HEK293T (cell line): ENCODE measurements at regions of chr19 and their contacts with region 1.

Region 1: DNA sequence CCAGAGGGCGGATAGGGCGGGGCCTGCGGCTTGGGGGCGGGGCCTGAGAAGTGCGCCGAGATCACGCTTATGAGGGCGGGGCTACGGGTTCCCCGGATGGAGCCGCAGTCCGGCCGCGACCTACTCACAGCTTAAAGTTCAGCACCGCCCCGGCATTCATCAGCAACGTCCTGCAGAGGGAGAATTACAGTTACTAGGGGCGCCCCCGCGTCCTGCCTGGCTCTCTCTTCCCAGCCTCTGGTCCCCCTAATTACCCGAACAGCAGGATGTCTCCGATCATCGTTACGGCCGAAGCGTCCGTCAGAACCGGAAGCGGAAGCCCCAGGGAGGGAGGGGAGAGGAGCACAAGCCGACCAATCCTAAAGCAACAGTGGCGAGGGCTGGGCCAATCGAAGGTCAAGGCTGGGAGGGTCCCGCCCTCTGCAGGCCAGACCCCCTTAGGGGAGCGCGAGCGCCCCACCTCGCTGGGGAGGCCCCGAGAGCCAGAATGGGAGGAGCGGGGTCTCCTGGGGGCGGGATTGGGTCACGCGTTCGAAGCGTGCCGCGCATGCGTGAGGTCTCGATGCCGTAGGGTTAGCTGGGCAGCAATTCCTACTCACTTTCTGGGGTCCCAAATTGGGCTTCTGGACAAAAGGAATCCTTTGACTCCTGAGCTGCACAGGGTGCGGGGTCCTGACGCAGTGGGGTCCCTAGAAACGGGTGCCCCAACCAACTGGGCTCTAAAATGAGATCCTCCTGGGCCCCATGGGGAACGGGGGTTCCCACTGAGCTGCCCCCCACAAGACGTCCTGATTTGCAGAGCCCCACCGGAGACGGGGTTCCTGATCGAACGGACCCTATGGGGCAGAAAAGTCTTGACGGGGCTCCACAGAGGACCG is at the start of gene SMIM7:
- DNase-seq: peak; percentile 98

Region 2: GRCh38 chr19:16628183-16628983 is 31.7 kb before region 1 on chr19 and contains the start of gene MED26:
- CTCF ChIA-PET with region 1: no interaction called
- POLR2A ChIA-PET with region 1: interaction called, 13 read pairs
- DNase-seq: peak; percentile 99

Region 3: GRCh38 chr19:16671652-16672274 is 11.7 kb after region 1 on chr19:
- CTCF ChIA-PET with region 1: no interaction called
- POLR2A ChIA-PET with region 1: interaction called, 12 read pairs
- DNase-seq: no peak

Region 4: GRCh38 chr19:16684216-16684615 is 24.1 kb after region 1 on chr19:
- CTCF ChIA-PET with region 1: no interaction called
- POLR2A ChIA-PET with region 1: interaction called, 10 read pairs
- DNase-seq: no peak

Region 5: DNA sequence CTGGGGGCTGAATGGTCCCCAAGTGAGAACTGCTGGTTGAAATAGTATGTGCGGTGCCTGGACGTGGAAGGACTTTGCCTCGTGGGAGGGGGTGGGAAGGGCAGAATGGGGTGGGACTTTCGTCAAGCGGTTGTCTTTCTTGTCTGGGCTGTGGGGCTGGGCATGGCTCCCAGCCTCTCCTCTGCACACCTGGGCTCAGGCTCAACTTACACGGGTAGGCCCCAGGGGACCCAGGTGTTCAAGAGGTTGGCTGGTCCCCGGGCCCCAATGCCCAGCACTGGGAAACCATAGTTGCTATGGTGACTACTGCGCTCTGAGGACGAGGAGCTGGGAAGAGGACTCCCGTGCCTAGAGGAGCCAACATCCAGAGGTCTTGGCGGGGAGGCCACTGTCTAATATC is 66.8 kb after region 1 on chr19:
- CTCF ChIA-PET with region 1: no interaction called
- POLR2A ChIA-PET with region 1: no interaction called
- DNase-seq: no peak